CD8-positive, alpha-beta T cell (primary cell): ENCODE measurements at regions of chr4 and their contacts with region 1.

Region 1: DNA sequence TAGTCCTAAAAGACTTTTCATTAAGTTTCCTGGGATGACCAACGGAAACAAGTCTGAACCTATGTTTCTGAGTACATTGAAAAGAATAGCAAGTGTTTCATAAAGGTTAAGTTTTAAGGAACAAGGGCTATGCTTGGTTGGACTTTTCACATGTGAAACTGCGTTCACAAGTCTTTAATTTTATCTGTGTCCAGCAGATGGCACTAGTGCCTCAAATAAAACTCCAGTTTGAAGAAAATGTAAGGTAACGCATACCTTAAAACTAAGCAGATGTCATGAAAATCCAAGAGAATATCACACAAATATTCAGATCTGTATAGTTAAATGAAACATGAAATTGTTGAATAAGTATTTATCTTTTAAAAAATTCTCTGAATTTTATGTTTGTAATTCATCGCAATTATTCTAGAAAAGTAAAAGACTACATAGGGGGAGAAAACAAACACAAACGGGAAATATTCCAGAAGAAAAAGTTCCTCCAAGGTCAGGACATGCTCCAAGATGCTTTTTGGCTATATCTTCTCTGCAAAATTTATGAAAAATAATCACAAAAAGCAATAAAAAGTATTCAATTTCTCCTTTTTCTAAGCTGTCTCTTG is 89.6 kb upstream of the MAD2L1 start:
- DNase-seq: peak in 4 of 9 experiments; percentile 17 to 80 (median 54)
- ATAC-seq: peak; percentile 46
- H3K4me3 ChIP-seq: no peak overlapping the region
- H3K4me3 Mint-ChIP-seq: no peak overlapping the region
- H3K27ac ChIP-seq: no peak overlapping the region
- H3K27ac Mint-ChIP-seq: no peak overlapping the region
- H3K4me1 ChIP-seq: no peaks in the 10 kb centered on the region
- H3K4me1 Mint-ChIP-seq: no peaks in the 10 kb centered on the region
- H3K27me3 ChIP-seq: no peaks in the 10 kb centered on the region
- H3K27me3 Mint-ChIP-seq: no peaks in the 10 kb centered on the region
- CTCF ChIP-seq: peak; percentile 74

Region 2: GRCh38 chr4:120066517-120067340 is 89.5 kb before region 1 on chr4 and contains the start of gene MAD2L1:
- CTCF ChIA-PET with region 1: no interaction called
- POLR2A ChIA-PET with region 1: no interaction called
- intact Hi-C with region 1: loop called in 1 of 2 experiments (anchors 5 kb)
- DNase-seq: peak; percentile 96 to 100 (median 99)
- ATAC-seq: peak; percentile 89
- H3K4me3 ChIP-seq: peak within 1 kb of the TSS; percentile 53 to 84
- H3K4me3 Mint-ChIP-seq: peak within 1 kb of the TSS; percentile 96
- H3K27ac ChIP-seq: peak within 1 kb of the TSS; percentile 79 to 96
- H3K27ac Mint-ChIP-seq: peak within 1 kb of the TSS; percentile 98
- H3K4me1 ChIP-seq: peaks cover 17% of the 10 kb centered on the region
- H3K4me1 Mint-ChIP-seq: peaks cover 66% of the 10 kb centered on the region
- H3K27me3 ChIP-seq: no peaks in the 10 kb centered on the region
- H3K27me3 Mint-ChIP-seq: no peaks in the 10 kb centered on the region
- CTCF ChIP-seq: no peak
- total RNA-seq, gene MAD2L1: 7.4 to 9.1 TPM

Region 3: GRCh38 chr4:120175272-120175671 is 19.1 kb after region 1 on chr4:
- CTCF ChIA-PET with region 1: no interaction called
- POLR2A ChIA-PET with region 1: no interaction called
- intact Hi-C with region 1: no loop called
- DNase-seq: no peak
- ATAC-seq: no peak
- H3K4me3 ChIP-seq: no peak overlapping the region
- H3K4me3 Mint-ChIP-seq: no peak overlapping the region
- H3K27ac ChIP-seq: no peak overlapping the region
- H3K27ac Mint-ChIP-seq: no peak overlapping the region
- H3K4me1 ChIP-seq: no peaks in the 10 kb centered on the region
- H3K4me1 Mint-ChIP-seq: no peaks in the 10 kb centered on the region
- H3K27me3 ChIP-seq: no peaks in the 10 kb centered on the region
- H3K27me3 Mint-ChIP-seq: peaks cover 8% of the 10 kb centered on the region
- CTCF ChIP-seq: no peak

Region 4: GRCh38 chr4:120481719-120482118 is 325.5 kb after region 1 on chr4:
- CTCF ChIA-PET with region 1: no interaction called
- POLR2A ChIA-PET with region 1: no interaction called
- intact Hi-C with region 1: no loop called
- DNase-seq: no peak
- ATAC-seq: no peak
- H3K4me3 ChIP-seq: no peak overlapping the region
- H3K4me3 Mint-ChIP-seq: no peak overlapping the region
- H3K27ac ChIP-seq: no peak overlapping the region
- H3K27ac Mint-ChIP-seq: no peak overlapping the region
- H3K4me1 ChIP-seq: no peaks in the 10 kb centered on the region
- H3K4me1 Mint-ChIP-seq: no peaks in the 10 kb centered on the region
- H3K27me3 ChIP-seq: no peaks in the 10 kb centered on the region
- H3K27me3 Mint-ChIP-seq: no peaks in the 10 kb centered on the region
- CTCF ChIP-seq: no peak

Region 5: DNA sequence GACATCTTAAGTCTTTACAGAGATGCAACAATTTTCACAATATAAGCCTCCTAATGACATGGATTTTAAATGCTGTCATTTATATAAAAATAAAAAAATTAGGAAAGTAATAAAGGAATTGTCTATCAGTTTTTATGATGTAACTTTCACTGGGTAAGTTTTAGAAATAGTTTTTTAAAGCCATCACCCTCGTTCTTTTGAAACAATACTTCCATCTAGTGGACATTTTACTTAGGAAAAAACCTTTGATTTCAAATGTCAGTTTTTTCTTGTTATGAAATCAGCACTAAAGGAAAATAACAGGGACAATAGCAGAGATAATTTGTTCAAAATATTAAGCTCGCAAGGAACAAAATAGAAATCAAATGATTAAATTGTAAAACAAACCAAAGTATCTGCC is 940.4 kb after region 1 on chr4:
- CTCF ChIA-PET with region 1: interaction called, 5 read pairs
- POLR2A ChIA-PET with region 1: no interaction called
- intact Hi-C with region 1: loop called (anchors 1 kb)
- DNase-seq: peak in 2 of 9 experiments; percentile 20 to 52
- ATAC-seq: no peak
- H3K4me3 ChIP-seq: no peak overlapping the region
- H3K4me3 Mint-ChIP-seq: no peak overlapping the region
- H3K27ac ChIP-seq: no peak overlapping the region
- H3K27ac Mint-ChIP-seq: no peak overlapping the region
- H3K4me1 ChIP-seq: no peaks in the 10 kb centered on the region
- H3K4me1 Mint-ChIP-seq: peaks cover 2% of the 10 kb centered on the region
- H3K27me3 ChIP-seq: no peaks in the 10 kb centered on the region
- H3K27me3 Mint-ChIP-seq: no peaks in the 10 kb centered on the region
- CTCF ChIP-seq: peak; percentile 77

Region 6: GRCh38 chr4:121252224-121252806 is 1096.1 kb after region 1 on chr4:
- CTCF ChIA-PET with region 1: no interaction called
- POLR2A ChIA-PET with region 1: no interaction called
- intact Hi-C with region 1: loop called (anchors 1 to 5 kb)
- DNase-seq: peak in 8 of 9 experiments; percentile 30 to 80 (median 62)
- ATAC-seq: no peak
- H3K4me3 ChIP-seq: no peak overlapping the region
- H3K4me3 Mint-ChIP-seq: no peak overlapping the region
- H3K27ac ChIP-seq: peak overlapping the region in 1 of 2 experiments; percentile 95
- H3K27ac Mint-ChIP-seq: peak overlapping the region; percentile 55
- H3K4me1 ChIP-seq: peaks cover 36% of the 10 kb centered on the region
- H3K4me1 Mint-ChIP-seq: peaks cover 59% of the 10 kb centered on the region
- H3K27me3 ChIP-seq: no peaks in the 10 kb centered on the region
- H3K27me3 Mint-ChIP-seq: no peaks in the 10 kb centered on the region
- CTCF ChIP-seq: peak; percentile 85

Region 7: GRCh38 chr4:121726642-121727268 is 1570.5 kb after region 1 on chr4:
- CTCF ChIA-PET with region 1: no interaction called
- POLR2A ChIA-PET with region 1: no interaction called
- intact Hi-C with region 1: loop called in 1 of 2 experiments (anchors 1 kb)
- DNase-seq: peak in 3 of 9 experiments; percentile 4 to 70 (median 59)
- ATAC-seq: peak; percentile 87
- H3K4me3 ChIP-seq: no peak overlapping the region
- H3K4me3 Mint-ChIP-seq: no peak overlapping the region
- H3K27ac ChIP-seq: no peak overlapping the region
- H3K27ac Mint-ChIP-seq: no peak overlapping the region
- H3K4me1 ChIP-seq: no peaks in the 10 kb centered on the region
- H3K4me1 Mint-ChIP-seq: no peaks in the 10 kb centered on the region
- H3K27me3 ChIP-seq: no peaks in the 10 kb centered on the region
- H3K27me3 Mint-ChIP-seq: no peaks in the 10 kb centered on the region
- CTCF ChIP-seq: peak; percentile 49